ENCODE measurements at regions of chr11 and their contacts with region 1.

Region 1: DNA sequence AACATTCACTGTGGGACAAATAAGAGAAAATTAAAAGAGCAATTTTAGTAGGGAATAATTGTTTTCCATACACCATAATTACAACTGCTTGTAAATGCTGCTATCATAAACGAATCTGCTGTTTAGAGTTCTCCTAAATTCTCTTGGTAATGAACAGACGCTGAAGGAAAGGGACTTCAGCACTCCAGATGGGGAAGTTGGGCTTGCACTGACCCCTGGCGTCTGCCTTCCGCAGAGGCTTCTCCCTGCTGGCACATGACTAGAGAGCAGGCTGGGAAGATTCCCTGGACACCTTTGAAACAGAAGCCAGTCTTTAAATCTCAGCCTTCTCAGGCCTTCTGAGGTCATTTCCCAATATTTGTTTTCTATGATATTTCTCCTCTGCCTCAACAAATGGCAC is 84.1 kb downstream of the NXPE2 start:
- DNase-seq: no peak
- ATAC-seq: no peak
- H3K4me3 Mint-ChIP-seq: no peak overlapping the region
- H3K27ac Mint-ChIP-seq: no peak overlapping the region
- H3K4me1 Mint-ChIP-seq: no peaks in the 10 kb centered on the region
- H3K27me3 Mint-ChIP-seq: no peaks in the 10 kb centered on the region
- CTCF ChIP-seq: no peak

Region 2: GRCh38 chr11:114340311-114341131 is 421.9 kb before region 1 on chr11:
- CTCF ChIA-PET with region 1: no interaction called
- POLR2A ChIA-PET with region 1: no interaction called
- intact Hi-C with region 1: loop called (anchors 1 kb)
- DNase-seq: no peak
- ATAC-seq: peak; percentile 49
- H3K4me3 Mint-ChIP-seq: peak overlapping the region; percentile 42
- H3K27ac Mint-ChIP-seq: no peak overlapping the region
- H3K4me1 Mint-ChIP-seq: peaks cover 5% of the 10 kb centered on the region
- H3K27me3 Mint-ChIP-seq: peaks cover 3% of the 10 kb centered on the region
- CTCF ChIP-seq: peak; percentile 34

Region 3: DNA sequence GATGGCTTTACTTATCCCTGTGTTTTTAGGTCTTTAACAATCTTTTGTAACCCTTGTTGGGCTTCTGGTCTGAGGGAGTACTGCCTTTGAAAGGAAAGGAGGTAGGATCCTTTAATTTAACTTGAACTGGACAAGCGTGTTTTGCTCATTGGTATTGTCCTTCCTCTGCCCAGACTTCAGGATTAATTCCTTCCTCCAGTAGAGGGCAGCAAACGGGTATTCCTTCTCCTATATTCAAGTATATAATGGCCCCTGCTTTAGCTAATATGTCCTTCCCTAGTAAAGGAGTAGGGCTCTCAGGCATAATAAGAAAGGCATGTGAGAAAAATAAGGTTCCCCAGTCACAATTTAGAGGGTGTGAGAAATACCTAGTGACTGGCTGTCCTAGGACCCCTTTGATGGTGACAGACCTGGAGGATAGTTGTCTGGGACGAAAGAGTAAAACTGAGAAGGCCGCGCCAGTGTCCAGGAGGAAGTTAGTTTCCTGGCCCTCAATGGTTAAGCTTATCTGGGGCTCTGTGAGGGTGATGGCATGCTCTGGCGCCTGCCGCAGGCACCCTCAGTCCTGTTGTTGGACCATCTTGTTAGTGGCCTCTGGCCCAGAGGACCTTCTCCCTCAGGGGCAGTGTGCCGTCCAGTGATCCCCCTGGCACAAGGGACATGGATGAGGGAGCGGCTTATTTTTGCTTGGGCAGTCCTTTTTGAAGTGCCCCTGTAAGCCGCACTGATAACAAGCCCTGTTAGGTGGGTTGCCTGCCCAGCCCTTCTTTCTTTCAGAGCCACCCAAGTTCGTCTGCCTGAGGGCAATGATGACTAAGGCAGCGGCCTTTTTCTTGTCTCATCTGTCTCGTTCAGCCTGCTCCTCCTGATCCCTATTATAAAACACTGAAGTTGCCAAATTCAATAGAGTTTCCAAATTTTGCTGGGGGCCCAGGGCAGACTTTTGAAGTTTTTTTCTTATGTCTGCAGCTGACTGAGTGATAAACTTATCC is 413.9 kb before region 1 on chr11:
- CTCF ChIA-PET with region 1: no interaction called
- POLR2A ChIA-PET with region 1: no interaction called
- intact Hi-C with region 1: loop called (anchors 2 kb)
- DNase-seq: no peak
- ATAC-seq: no peak
- H3K4me3 Mint-ChIP-seq: no peak overlapping the region
- H3K27ac Mint-ChIP-seq: no peak overlapping the region
- H3K4me1 Mint-ChIP-seq: no peaks in the 10 kb centered on the region
- H3K27me3 Mint-ChIP-seq: peaks cover 7% of the 10 kb centered on the region
- CTCF ChIP-seq: peak; percentile 45

Region 4: GRCh38 chr11:114796954-114797721 is 34.7 kb after region 1 on chr11:
- CTCF ChIA-PET with region 1: no interaction called
- POLR2A ChIA-PET with region 1: no interaction called
- intact Hi-C with region 1: no loop called
- DNase-seq: no peak
- ATAC-seq: no peak
- H3K4me3 Mint-ChIP-seq: no peak overlapping the region
- H3K27ac Mint-ChIP-seq: no peak overlapping the region
- H3K4me1 Mint-ChIP-seq: no peaks in the 10 kb centered on the region
- H3K27me3 Mint-ChIP-seq: peaks cover 16% of the 10 kb centered on the region
- CTCF ChIP-seq: no peak